ENCODE measurements at regions of chr11 and their contacts with region 1.

Region 1: GRCh38 chr11:75525596-75526541 is at the start of gene GDPD5:
- DNase-seq: peak; percentile 88
- ATAC-seq: peak; percentile 91
- H3K4me3 Mint-ChIP-seq: peak within 1 kb of the TSS; percentile 73
- H3K27ac Mint-ChIP-seq: peak within 1 kb of the TSS; percentile 8
- H3K4me1 Mint-ChIP-seq: peaks cover 30% of the 10 kb centered on the region
- H3K27me3 Mint-ChIP-seq: peaks cover 38% of the 10 kb centered on the region
- total RNA-seq, gene GDPD5: 11.3 to 33.9 TPM

Region 2: GRCh38 chr11:75445315-75445953 is 80.4 kb before region 1 on chr11:
- CTCF ChIA-PET with region 1: interaction called, 212 read pairs
- DNase-seq: peak; percentile 78
- ATAC-seq: peak; percentile 77
- H3K4me3 Mint-ChIP-seq: no peak overlapping the region
- H3K27ac Mint-ChIP-seq: no peak overlapping the region
- H3K4me1 Mint-ChIP-seq: no peaks in the 10 kb centered on the region
- H3K27me3 Mint-ChIP-seq: peaks cover 2% of the 10 kb centered on the region

Region 3: GRCh38 chr11:75450826-75451821 is 74.7 kb before region 1 on chr11:
- CTCF ChIA-PET with region 1: interaction called, 212 read pairs
- DNase-seq: no peak
- ATAC-seq: peak; percentile 50
- H3K4me3 Mint-ChIP-seq: no peak overlapping the region
- H3K27ac Mint-ChIP-seq: no peak overlapping the region
- H3K4me1 Mint-ChIP-seq: no peaks in the 10 kb centered on the region
- H3K27me3 Mint-ChIP-seq: peaks cover 2% of the 10 kb centered on the region

Region 4: DNA sequence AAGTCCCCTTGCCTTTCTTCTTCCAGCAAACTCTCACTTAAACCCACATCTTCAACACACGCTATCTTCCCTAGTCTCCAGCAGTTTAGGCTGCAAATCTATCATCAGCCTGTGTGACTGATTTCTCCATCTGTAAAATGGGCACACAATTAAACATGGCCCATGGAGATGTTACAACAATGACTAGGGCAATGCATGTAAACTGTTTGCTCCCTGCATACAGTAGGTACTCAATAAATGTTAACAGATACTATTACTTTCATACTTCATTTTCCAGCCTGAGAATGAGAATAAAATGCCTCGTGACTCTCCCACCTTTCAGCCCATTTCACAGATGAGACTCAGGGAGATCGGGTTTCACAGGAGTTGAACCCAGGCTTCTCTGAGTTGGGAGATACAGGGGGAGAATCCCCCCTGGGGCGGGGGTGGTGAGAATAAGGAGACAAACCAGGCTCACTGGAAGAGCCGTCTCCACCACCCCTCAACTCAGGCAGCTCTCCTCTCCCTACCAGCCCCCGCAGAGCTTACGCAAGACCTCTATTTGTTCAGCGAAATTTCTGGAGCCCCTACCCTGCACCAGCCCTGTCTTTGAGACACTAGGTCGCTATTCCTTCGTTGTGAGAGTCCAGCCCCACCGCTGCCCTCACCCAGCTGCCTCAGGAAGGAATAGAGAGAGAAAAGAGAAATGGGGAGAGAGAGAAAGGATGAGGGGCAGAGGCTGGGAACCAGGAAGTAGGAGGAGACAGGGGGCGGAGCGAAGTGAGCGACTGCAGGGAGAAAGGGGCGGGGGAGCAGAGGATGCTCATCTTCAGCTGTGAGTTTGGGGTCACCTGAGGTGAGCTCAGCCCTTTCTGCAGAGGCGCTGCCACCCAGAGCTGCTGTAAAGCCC is 50.7 kb before region 1 on chr11:
- CTCF ChIA-PET with region 1: interaction called, 17 read pairs
- DNase-seq: peak; percentile 95
- ATAC-seq: peak; percentile 92
- H3K4me3 Mint-ChIP-seq: peak overlapping the region; percentile 69
- H3K27ac Mint-ChIP-seq: peak overlapping the region; percentile 97
- H3K4me1 Mint-ChIP-seq: peaks cover 35% of the 10 kb centered on the region
- H3K27me3 Mint-ChIP-seq: no peaks in the 10 kb centered on the region

Region 5: GRCh38 chr11:75492181-75492820 is 33.6 kb before region 1 on chr11:
- CTCF ChIA-PET with region 1: interaction called, 10 read pairs
- DNase-seq: peak; percentile 79
- ATAC-seq: peak; percentile 92
- H3K4me3 Mint-ChIP-seq: peak overlapping the region; percentile 58
- H3K27ac Mint-ChIP-seq: peak overlapping the region; percentile 79
- H3K4me1 Mint-ChIP-seq: peaks cover 25% of the 10 kb centered on the region
- H3K27me3 Mint-ChIP-seq: no peaks in the 10 kb centered on the region

Measured in activated CD8-positive, alpha-beta memory T cell treated with anti-CD3 and anti-CD28 coated beads, Interleukin-2, amount 10 ng/mL, durations not matched to agents 7 days and 5 days (primary cell).